Upper lobe of right lung (tissue), 1 donor: ENCODE measurements at regions of chr20 and their contacts with region 1.

Region 1: DNA sequence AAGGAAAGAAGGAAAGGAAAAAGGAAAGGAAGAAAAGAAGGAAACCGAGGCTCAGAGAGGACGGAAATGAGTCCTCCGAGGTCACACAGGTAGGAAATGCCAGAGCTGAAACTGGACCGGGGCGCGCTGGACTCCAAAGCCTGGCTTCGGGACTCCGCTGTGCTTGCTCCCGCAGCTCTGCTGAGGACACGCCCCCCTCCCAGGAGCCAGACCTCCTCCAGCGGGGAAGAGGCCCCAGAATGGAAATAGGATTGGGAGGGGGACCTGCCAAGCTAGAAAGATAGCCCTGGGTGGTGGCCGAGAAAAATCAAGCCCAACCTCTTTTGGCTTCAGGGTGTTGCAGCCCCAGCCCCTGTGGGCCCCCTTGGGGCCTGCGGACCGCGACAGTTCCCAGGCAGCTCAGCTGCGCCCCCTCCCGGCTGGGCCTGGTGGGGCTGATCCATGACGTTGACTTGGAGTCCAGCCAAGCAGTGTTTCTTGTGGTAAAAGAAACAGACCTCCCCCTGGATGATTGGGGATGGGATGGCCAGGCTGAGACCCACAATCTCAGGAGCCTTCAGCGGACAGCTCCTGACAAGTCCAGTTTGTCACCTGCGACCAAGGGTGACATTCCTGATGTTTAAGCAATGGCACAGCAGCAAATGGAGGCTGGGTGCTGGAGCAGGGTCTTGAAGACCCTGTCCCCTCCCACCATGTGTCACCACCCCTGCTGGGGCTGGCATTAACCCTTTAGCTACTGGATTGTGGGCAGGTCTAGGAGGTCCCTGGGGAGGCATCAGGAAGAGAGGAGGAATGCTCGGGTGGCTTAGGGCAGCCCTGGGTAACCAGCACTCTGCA is 55.5 kb downstream of the RIPOR3 start:
- DNase-seq: peak; percentile 83
- ATAC-seq: peak; percentile 85
- H3K4me3 ChIP-seq: peak overlapping the region; percentile 14
- H3K27ac ChIP-seq: no peak overlapping the region
- H3K4me1 ChIP-seq: peaks cover 22% of the 10 kb centered on the region
- H3K27me3 ChIP-seq: no peaks in the 10 kb centered on the region
- CTCF ChIP-seq: peak; percentile 90

Region 2: DNA sequence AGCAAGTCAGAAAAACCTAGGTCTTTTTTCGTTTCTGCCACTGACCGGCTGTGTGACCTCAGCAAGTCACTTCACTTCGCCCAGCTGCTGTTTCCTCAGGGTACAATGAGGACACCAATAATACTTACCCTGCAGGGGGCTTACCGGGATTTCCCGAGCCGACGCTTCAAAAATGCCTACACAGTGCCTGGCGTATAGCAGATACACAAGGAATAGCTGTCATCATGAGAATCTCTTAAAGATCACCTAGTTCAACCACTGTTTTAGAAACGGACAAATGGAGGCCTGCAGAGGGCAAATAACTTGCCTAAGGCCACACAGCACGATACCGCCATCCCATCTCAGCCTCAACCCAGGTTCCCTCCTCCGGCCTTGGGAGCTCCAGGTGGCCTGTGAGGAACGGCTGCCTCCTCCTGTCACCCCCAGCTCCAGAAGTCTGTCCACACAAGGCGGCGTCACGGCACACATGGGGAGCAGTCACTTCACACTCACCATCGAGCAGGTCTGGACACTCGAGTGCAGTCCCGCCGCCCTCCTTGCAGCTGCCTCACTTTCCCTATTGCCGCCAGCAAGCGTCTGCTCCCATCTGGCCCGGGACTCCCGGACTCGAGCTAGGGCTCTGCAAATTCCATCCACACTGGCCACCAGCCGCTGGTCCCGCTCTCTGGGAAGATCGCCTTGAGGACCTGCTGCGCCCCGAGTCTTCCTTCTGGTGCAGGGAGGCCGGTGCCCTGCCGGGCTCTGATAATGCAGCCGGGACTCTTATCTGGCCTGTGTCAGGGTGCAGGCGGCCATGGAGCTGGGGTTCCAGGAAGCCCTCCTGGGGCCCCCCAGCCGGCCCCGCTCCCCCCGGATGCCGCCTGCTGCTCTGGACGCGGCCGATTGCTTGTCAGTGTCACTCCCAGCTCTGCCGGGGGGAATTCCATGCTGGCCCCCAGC is 55.0 kb after region 1 on chr20 and contains the start of gene RIPOR3:
- intact Hi-C with region 1: loop called (anchors 10 kb)
- DNase-seq: no peak
- ATAC-seq: peak; percentile 37
- H3K4me3 ChIP-seq: peak within 1 kb of the TSS; percentile 46
- H3K27ac ChIP-seq: peak within 1 kb of the TSS; percentile 47
- H3K4me1 ChIP-seq: peaks cover 7% of the 10 kb centered on the region
- H3K27me3 ChIP-seq: peaks cover 13% of the 10 kb centered on the region
- CTCF ChIP-seq: no peak
- total RNA-seq, gene RIPOR3: 6.8 TPM